Activated T-helper 2 cell treated with anti-CD3 and anti-CD28 coated beads, Interferon-gamma antibody, Interleukin-2, Interleukin-4, amounts not matched to agents 10 μg/mL and 5 μg/mL and 100 μg/mL, durations not matched to agents 14 hours and 24 hours and 36 hours (primary cell): ENCODE measurements at regions of chr1 and their contacts with region 1.

Region 1: DNA sequence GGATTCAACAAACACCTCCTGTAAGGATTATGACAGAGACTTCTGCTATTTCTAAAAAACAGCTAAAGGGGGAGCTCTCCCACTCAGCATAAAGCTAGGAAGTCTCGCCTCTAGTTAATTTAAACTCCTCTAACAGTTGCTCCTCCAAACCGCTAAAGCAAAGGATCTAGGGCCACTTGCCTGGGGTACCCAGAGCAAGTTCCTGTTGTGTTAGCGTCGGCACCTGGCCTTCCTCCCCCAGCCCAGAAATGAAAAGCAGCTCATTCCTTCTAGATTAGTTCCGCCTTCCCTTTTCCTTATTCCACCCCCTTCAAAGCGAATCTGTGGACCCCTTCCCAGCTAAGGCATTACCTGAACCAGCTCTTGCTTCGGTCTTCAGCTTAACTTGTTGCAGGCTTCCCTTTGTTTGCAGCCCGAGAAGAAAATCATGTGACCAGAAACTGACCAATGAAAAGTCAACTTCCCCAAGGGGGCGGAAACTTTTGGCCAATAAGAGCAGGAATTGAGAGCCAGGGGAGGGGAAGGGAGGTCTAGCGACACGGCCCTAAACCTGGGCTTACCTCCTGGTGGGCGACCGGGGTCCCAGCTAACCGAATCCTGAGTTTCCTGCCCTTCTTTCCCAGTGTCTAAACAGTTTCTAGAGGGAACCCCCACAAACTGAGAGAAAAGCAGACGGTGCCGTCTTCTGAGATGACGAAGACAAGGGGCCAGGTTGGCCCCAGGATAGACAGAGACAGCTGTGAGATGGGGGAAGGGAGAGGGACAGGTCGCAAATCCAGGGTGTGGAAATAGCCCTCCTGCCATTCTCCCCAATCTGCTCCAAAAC is at the start of gene PBXIP1:
- DNase-seq: peak; percentile 86
- H3K4me3 Mint-ChIP-seq: peak within 1 kb of the TSS; percentile 95
- H3K27ac Mint-ChIP-seq: peak within 1 kb of the TSS; percentile 99
- H3K4me1 Mint-ChIP-seq: peaks cover 58% of the 10 kb centered on the region
- H3K27me3 Mint-ChIP-seq: no peaks in the 10 kb centered on the region
- total RNA-seq, gene PBXIP1: 23.6 and 25.3 TPM in 2 replicates

Region 2: DNA sequence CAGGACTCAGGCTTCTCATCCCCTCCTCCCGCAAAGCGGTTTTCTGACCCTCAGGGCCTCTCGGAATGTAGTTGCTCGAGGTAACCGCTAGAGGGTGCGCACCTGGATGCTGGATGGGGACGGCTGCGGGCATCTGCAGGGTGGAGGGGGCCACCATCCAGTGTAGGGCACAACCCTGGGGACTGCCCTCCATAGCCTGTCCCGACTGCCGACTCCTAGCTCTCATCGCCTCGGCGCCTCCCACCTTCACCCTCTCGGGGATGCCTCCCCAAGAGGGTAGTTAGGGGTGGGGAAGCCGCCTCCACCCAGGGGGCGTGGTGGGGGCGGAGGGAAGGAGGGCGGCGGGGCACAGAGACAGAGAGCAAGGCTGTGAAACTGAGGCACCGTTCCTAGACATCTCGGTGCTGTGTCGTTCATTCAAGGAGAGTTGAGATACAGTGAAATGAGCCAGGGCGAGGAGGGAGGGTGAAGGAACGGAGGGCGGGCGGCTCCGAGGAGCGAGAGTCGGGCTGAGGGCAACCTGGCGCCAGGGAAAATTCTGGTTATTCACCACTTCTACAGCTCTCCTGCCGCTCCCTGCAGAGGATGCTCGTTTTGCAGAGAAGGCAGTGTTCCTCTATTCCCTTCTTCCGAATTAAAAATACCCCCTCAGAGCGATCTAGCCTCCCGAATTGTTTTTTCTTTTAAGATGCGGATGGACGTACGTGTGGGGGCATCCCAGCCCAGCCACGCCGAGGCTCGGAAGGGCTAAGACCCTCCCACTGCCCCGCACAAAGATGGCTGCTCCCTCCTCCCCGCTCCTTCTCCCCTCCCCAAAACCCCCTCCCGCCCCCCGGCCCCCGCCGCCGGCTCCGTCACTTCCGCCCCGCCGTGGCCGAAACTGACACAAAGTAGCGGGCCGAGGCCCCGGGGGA is 631.0 kb before region 1 on chr1 and contains the start of gene ATP8B2:
- intact Hi-C with region 1: loop called (anchors 10 kb)
- DNase-seq: peak; percentile 77
- H3K4me3 Mint-ChIP-seq: peak within 1 kb of the TSS; percentile 95
- H3K27ac Mint-ChIP-seq: peak within 1 kb of the TSS; percentile 89
- H3K4me1 Mint-ChIP-seq: peaks cover 33% of the 10 kb centered on the region
- H3K27me3 Mint-ChIP-seq: peaks cover 18% of the 10 kb centered on the region
- total RNA-seq, gene ATP8B2: 44.0 and 47.0 TPM in 2 replicates

Region 3: DNA sequence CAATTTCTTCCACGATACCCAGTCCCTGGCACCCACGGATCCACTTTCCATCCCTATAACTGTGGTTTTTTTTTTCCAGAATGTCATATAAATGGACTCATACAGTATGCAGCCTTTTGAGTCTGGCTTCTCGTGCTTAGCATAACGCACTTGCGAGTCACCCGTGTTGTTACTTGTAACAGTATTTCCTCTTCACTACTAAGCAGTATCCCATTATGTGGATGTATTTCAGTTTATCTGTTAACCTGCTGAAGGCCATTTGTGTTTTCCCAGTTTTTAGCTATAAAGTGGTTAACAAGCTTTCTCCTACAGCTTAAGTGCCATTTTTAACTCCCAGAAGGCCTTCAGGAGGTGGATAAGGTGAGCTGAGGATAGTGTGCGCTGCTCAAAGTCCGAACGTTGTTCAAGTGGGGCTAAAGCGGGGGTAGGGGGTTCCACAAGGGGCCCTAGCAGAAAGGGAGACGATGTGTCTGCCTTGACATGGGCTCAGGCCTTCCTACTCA is 348.8 kb before region 1 on chr1:
- intact Hi-C with region 1: no loop called
- DNase-seq: no peak
- H3K4me3 Mint-ChIP-seq: peak overlapping the region; percentile 98
- H3K27ac Mint-ChIP-seq: peak overlapping the region; percentile 98
- H3K4me1 Mint-ChIP-seq: peaks cover 65% of the 10 kb centered on the region
- H3K27me3 Mint-ChIP-seq: no peaks in the 10 kb centered on the region

Region 4: GRCh38 chr1:154936555-154937084 is 19.3 kb before region 1 on chr1 and contains the start of gene PMVK:
- intact Hi-C with region 1: loop called (anchors 1 kb)
- DNase-seq: peak; percentile 94
- H3K4me3 Mint-ChIP-seq: peak within 1 kb of the TSS; percentile 93
- H3K27ac Mint-ChIP-seq: peak within 1 kb of the TSS; percentile 95
- H3K4me1 Mint-ChIP-seq: peaks cover 45% of the 10 kb centered on the region
- H3K27me3 Mint-ChIP-seq: no peaks in the 10 kb centered on the region
- total RNA-seq, gene PMVK: 44.7 and 44.8 TPM in 2 replicates

Region 5: GRCh38 chr1:155218854-155219591 is 263.1 kb after region 1 on chr1:
- intact Hi-C with region 1: no loop called
- DNase-seq: no peak
- H3K4me3 Mint-ChIP-seq: no peak overlapping the region
- H3K27ac Mint-ChIP-seq: peak overlapping the region; percentile 71
- H3K4me1 Mint-ChIP-seq: peaks cover 16% of the 10 kb centered on the region
- H3K27me3 Mint-ChIP-seq: no peaks in the 10 kb centered on the region